Activated T-helper 2 cell treated with anti-CD3 and anti-CD28 coated beads, Interferon-gamma antibody, Interleukin-2, Interleukin-4, amounts not matched to agents 10 μg/mL and 5 μg/mL and 100 μg/mL, durations not matched to agents 14 hours and 24 hours and 36 hours (primary cell): ENCODE measurements at regions of chr11 and their contacts with region 1.

Region 1: DNA sequence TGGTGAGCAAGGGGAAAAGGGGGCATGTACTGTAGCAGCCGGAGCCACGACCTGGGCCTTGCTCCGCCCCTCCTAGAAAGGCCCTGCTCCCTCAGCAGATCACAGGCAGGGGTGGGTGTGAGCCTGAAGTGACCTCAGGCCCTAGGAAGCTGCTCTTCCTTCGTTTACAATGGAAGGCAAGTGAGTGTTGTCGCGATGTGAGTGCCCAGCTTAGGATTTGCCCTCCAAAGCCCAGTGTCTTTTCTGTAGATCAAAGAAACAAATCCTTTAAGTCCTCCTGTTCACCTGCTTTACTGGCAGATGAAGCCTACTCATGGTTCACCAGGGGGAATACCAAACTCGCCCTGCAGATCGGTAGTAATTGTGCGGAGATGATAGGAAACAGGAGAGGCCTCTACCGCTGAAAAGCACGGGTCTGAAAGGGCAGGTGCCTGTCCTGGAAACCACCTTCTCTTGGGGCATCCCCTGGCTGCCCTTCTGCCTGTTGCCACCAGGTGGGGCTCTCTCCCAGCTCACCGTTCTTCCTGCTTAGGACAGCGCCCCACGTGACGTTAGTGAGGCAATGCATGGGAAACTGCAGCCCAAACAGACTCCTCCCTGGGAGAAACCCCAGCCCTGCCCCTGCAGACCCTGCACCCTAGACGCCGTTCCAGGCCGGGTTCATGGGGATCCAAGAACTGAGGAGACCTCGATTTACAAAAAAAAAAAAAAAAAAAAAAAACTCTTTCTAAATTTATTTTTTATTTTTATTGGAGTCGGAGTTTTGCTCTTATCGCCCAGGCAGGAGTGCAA is 45.9 kb upstream of the RAB1B start:
- DNase-seq: peak; percentile 90
- H3K4me3 Mint-ChIP-seq: no peak overlapping the region
- H3K27ac Mint-ChIP-seq: peak overlapping the region; percentile 90
- H3K4me1 Mint-ChIP-seq: peaks cover 16% of the 10 kb centered on the region
- H3K27me3 Mint-ChIP-seq: no peaks in the 10 kb centered on the region

Region 2: DNA sequence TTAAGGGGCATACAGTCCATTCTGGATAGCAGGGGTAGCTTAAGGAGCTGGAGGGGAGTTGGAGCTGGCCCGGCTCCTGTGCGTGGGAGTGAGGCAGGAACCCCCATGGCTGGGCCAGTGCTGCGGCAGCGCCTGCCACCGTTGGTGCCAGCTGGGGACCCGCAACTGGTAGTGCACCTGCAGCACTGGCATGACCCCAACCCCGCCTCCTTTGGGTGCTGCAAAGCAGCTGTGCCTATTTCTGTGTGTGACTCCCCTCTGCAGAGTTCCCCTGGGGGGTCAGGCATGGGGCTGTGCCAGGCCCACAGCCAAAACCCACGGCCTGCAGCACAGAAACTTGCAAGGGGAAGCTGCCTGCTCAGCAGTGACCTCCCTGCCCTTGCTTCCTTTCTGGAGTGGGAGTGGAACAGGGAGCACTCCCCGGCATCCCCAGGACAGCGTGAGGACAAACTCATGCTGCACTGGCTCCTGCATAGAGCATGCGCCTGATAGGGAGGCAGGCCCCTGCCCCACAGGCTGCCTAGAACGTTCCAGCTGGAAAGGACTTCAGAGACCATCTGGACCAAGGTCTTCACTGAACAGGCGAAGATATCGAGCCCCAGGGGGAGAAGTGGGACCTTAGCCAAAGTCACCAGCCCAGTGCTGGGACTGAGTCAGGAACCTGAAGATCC is 19.7 kb after region 1 on chr11:
- intact Hi-C with region 1: no loop called
- DNase-seq: no peak
- H3K4me3 Mint-ChIP-seq: no peak overlapping the region
- H3K27ac Mint-ChIP-seq: no peak overlapping the region
- H3K4me1 Mint-ChIP-seq: no peaks in the 10 kb centered on the region
- H3K27me3 Mint-ChIP-seq: no peaks in the 10 kb centered on the region

Region 3: DNA sequence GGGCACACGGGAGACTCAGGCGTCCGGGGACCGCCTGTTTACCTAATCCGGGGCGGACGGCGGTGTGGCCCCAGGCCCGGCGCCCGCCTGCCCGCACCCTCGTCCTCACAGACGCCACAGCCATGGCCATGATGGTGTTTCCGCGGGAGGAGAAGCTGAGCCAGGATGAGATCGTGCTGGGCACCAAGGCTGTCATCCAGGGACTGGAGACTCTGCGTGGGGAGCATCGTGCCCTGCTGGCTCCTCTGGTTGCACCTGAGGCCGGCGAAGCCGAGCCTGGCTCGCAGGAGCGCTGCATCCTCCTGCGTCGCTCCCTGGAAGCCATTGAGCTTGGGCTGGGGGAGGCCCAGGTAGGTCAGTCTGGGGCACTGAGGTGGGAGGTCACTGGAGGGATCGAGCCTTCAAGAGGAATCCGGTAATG is 35.9 kb after region 1 on chr11:
- intact Hi-C with region 1: loop called (anchors 1 kb)
- DNase-seq: no peak
- H3K4me3 Mint-ChIP-seq: peak overlapping the region; percentile 86
- H3K27ac Mint-ChIP-seq: peak overlapping the region; percentile 49
- H3K4me1 Mint-ChIP-seq: peaks cover 19% of the 10 kb centered on the region
- H3K27me3 Mint-ChIP-seq: no peaks in the 10 kb centered on the region

Region 4: DNA sequence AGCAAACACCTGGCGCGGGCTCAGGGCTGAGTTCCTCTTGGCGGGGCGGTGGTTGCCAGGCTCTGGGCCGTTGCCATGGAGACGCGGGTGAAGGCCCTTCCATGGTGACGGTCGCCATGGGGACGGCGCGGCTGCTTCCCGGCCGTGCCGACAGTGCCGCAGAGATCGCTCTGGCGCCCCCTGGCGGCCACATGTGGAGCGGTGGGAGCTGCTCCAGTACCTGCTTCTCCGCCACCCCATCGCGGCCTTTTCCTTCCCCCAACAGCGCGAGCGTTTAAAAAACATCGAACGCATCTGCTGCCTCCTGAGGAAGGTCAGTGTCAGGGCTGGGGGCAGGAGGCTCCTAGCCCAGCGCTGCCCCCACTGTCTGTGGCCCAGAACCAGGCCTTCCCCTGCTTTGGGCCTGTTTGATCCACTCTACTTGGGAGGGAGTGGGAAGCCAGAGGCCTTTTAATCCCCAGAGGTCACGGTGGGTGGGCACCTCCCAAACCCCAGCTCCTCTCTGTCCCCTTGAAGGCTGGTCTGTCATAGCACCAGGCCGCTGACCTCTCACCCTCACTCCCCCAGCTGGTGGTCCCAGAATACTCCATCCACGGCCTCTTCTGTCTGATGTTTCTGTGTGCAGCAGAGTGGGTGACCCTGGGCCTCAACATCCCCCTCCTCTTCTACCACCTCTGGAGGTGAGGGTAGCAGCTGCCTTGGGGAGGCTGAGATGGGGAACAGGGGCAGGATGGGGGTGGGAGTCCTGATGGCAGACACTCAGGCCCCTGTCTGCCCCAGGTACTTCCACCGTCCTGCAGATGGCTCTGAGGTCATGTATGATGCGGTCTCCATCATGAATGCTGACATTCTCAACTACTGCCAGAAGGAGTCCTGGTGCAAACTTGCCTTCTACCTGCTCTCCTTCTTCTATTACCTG is 60.2 kb after region 1 on chr11:
- intact Hi-C with region 1: loop called (anchors 1 kb)
- DNase-seq: peak; percentile 97
- H3K4me3 Mint-ChIP-seq: no peak overlapping the region
- H3K27ac Mint-ChIP-seq: no peak overlapping the region
- H3K4me1 Mint-ChIP-seq: peaks cover 26% of the 10 kb centered on the region
- H3K27me3 Mint-ChIP-seq: peaks cover 14% of the 10 kb centered on the region

Region 5: GRCh38 chr11:66328307-66329144 is 106.0 kb after region 1 on chr11:
- intact Hi-C with region 1: loop called (anchors 2 kb)
- DNase-seq: peak; percentile 70
- H3K4me3 Mint-ChIP-seq: no peak overlapping the region
- H3K27ac Mint-ChIP-seq: peak overlapping the region; percentile 73
- H3K4me1 Mint-ChIP-seq: peaks cover 23% of the 10 kb centered on the region
- H3K27me3 Mint-ChIP-seq: no peaks in the 10 kb centered on the region

Region 6: GRCh38 chr11:66344550-66345315 is 122.2 kb after region 1 on chr11 and contains the start of gene BRMS1:
- intact Hi-C with region 1: no loop called
- DNase-seq: peak; percentile 93
- H3K4me3 Mint-ChIP-seq: peak within 1 kb of the TSS; percentile 93
- H3K27ac Mint-ChIP-seq: peak within 1 kb of the TSS; percentile 91
- H3K4me1 Mint-ChIP-seq: peaks cover 32% of the 10 kb centered on the region
- H3K27me3 Mint-ChIP-seq: no peaks in the 10 kb centered on the region
- total RNA-seq, gene BRMS1: 45.1 and 46.0 TPM in 2 replicates